Left cardiac atrium (tissue), 4 donors: ENCODE measurements at regions of chr15 and their contacts with region 1.

Region 1: GRCh38 chr15:73873889-73874511 is 636 bp downstream of the TBC1D21 start:
- DNase-seq: no peak
- ATAC-seq: no peak

Region 2: DNA sequence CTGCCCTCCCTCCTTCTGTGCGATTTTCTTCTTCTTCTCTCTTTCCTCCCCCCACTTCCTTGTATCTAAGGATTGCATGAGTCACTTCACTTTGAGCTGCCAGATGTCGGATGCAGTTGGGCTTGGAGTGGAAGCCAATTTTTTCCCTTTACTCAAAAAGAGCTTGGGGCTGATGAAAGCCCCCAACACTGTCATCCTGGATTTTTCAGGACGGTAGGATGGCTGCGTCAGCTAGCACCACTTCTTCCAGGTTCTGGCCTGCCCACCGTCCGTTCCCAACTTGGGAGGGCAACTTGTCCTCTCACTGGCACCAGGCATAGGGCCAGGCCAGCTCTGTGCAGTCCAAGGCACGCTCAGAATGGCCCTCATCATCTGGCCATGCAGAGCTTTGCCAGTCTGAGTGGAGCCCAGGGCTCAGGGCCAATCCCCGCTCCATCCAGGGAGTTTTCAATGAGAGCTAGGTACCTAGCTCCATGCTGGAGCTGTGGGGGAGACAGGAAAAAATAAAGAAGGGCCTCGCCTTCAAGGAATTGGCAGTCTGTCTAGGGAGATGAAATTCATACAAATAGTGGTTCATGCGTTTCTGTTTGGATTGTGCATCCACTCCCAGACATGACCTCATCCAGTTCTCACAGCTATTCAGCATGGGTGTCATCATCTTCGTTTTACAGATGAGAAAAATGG is 73.2 kb before region 1 on chr15:
- intact Hi-C with region 1: loop called in 1 of 2 experiments (anchors 5 kb)
- DNase-seq: peak; percentile 73
- ATAC-seq: peak; percentile 78 to 80